Activated CD8-positive, alpha-beta memory T cell treated with anti-CD3 and anti-CD28 coated beads, Interleukin-2, amount 10 ng/mL, durations not matched to agents 7 days and 5 days (primary cell): ENCODE measurements at regions of chr15 and their contacts with region 1.

Region 1: DNA sequence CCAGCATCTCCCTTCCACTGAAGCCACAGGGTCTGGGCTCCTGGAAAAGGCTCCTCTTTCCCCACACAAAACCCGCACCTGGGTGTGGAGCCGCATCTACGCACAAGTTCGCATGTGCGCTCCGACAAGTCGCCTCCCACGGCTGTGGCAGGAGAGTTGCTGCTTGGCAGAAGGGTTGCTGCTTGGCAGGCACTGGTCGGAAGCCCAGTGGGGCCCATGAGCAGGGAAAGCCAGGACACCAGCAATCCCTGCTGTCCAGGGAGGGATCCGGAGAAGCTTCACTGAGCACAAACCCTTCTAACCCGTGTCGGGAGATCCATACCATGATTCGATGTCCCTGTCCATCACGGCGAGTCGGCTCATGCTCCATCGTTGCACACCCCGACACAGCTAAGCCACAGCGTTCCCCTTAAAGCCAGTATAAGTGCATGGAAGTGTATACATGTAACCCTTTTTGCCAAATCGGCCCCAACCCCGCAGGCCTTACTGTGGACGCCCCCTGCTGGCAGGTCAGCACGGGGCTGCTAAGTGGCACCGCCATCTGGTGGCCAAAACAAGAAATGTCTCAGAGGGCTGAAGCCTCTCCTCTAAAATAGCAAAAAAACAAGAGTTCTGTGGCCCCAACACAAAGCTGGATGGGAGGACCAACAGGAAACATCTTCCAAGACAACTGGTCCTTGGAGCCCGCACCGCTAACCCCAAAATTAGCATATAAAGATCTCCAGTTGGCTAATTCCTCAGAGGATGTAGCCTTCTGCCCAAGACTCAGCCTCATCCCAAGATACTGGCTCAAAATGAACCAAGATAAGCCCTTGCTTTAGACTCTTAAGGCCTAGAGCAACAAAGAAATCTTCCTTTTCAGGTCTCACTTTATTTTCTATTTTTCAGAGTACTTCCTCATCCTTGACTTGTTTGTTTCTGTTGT is 8.3 kb downstream of the ANKRD63 start:
- DNase-seq: peak; percentile 90
- ATAC-seq: peak; percentile 75
- H3K4me3 Mint-ChIP-seq: no peak overlapping the region
- H3K27ac Mint-ChIP-seq: no peak overlapping the region
- H3K4me1 Mint-ChIP-seq: peaks cover 8% of the 10 kb centered on the region
- H3K27me3 Mint-ChIP-seq: peaks cover 30% of the 10 kb centered on the region

Region 2: GRCh38 chr15:40028853-40029252 is 245.8 kb before region 1 on chr15:
- CTCF ChIA-PET with region 1: no interaction called
- DNase-seq: no peak
- ATAC-seq: no peak
- H3K4me3 Mint-ChIP-seq: no peak overlapping the region
- H3K27ac Mint-ChIP-seq: no peak overlapping the region
- H3K4me1 Mint-ChIP-seq: no peaks in the 10 kb centered on the region
- H3K27me3 Mint-ChIP-seq: no peaks in the 10 kb centered on the region

Region 3: GRCh38 chr15:40044717-40045571 is 229.7 kb before region 1 on chr15:
- CTCF ChIA-PET with region 1: interaction called, 107 read pairs
- DNase-seq: peak; percentile 90
- ATAC-seq: peak; percentile 92
- H3K4me3 Mint-ChIP-seq: peak overlapping the region; percentile 22
- H3K27ac Mint-ChIP-seq: peak overlapping the region; percentile 62
- H3K4me1 Mint-ChIP-seq: peaks cover 69% of the 10 kb centered on the region
- H3K27me3 Mint-ChIP-seq: no peaks in the 10 kb centered on the region

Region 4: DNA sequence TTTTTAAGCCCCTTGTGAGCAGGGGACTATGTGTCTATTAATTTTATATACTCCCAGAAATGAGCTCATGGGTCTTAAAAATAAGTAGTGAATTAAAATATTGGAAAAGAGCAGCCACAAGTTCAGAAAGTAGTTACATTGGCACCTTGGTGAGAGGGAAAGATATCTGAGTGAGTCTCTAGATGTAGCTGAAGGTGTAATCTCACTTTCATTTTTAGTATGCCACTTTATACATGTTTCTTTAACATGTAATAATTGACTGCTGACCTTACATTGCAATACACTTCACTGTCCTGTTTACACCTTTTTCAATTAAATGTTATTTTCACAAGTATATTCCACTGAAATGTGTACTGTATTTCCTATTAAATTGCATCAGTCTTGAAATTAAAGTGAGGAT is 47.9 kb before region 1 on chr15:
- CTCF ChIA-PET with region 1: interaction called, 34 read pairs
- DNase-seq: no peak
- ATAC-seq: no peak
- H3K4me3 Mint-ChIP-seq: no peak overlapping the region
- H3K27ac Mint-ChIP-seq: no peak overlapping the region
- H3K4me1 Mint-ChIP-seq: peaks cover 16% of the 10 kb centered on the region
- H3K27me3 Mint-ChIP-seq: no peaks in the 10 kb centered on the region

Region 5: DNA sequence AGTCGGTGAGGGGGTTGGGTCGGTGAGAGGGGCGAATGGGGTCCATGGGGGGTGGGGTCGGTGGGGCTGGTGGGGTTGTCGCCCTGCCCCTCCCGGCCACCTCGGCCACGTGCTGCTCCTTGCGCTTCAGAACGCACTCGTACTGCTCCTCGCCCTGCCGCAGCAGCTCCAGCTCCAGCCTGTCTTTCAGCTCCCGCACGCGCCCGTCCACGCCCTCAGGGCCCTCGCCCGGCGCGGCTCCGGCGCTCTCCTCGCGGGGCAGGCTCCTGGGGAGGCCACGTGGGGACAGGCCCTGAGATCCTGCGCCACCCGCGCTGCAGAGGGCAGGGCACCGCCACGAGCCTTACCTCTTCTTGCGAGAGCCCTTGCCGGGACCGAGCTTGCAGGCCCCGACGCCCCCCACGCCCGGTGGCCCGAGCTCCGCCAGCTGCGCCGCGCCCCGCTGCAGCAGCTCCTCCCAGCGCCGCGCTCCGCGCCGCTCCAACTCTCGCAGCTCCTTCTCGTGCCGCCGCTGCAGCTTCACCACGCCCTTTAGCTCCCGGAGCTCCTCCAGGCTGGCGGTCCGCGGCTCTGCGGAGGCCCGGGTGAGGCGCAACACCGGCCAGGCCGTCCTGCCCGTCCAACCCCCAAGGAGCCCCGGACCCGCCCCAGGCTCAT is 16.4 kb after region 1 on chr15:
- CTCF ChIA-PET with region 1: interaction called, 32 read pairs
- DNase-seq: no peak
- ATAC-seq: no peak
- H3K4me3 Mint-ChIP-seq: no peak overlapping the region
- H3K27ac Mint-ChIP-seq: no peak overlapping the region
- H3K4me1 Mint-ChIP-seq: no peaks in the 10 kb centered on the region
- H3K27me3 Mint-ChIP-seq: no peaks in the 10 kb centered on the region

Region 6: DNA sequence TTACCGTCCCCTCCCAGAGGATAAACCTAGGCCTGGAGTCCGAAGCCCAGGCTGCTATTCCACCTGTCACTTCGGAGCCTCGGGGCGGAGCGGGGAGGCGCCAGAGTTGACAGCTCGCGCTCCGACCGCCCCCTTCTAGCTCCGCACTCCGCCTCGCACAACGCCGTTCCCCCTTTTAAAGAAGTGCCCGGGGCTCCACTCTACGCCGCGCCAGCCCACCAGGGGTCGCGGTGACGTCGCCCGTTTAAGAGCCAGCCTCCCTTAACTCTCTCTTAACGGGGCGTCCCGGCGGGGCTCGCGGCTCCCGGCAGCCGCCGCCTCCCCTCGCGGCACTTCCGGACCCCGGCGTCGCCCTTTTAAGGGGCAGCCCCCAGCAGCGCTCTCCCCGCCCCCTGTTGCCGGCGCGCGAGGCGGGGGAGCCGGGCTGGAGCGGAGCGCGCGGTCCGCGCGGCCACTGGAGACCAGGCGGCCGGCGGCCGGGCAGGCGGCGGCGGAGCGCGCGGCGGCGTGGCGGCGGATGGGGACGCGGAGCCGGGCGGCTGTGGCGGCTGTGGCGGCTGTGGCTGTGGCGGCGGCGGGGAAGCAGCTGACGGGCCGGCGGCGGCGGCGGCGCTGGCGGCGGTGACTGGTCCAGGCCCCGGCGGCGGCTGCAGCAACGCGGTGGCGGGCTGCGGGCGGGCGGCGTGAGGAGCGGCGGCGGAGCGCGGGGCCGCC is 48.8 kb after region 1 on chr15 and contains the start of gene INAFM2:
- CTCF ChIA-PET with region 1: interaction called, 17 read pairs
- DNase-seq: peak; percentile 93
- ATAC-seq: peak; percentile 92
- H3K4me3 Mint-ChIP-seq: peak within 1 kb of the TSS; percentile 67
- H3K27ac Mint-ChIP-seq: peak within 1 kb of the TSS; percentile 38
- H3K4me1 Mint-ChIP-seq: peaks cover 28% of the 10 kb centered on the region
- H3K27me3 Mint-ChIP-seq: peaks cover 16% of the 10 kb centered on the region
- total RNA-seq, gene INAFM2: 4.9 to 10.2 TPM

Region 7: GRCh38 chr15:40421246-40422157 is 146.9 kb after region 1 on chr15:
- CTCF ChIA-PET with region 1: interaction called, 11 read pairs
- DNase-seq: peak; percentile 87
- ATAC-seq: peak; percentile 99
- H3K4me3 Mint-ChIP-seq: no peak overlapping the region
- H3K27ac Mint-ChIP-seq: no peak overlapping the region
- H3K4me1 Mint-ChIP-seq: peaks cover 7% of the 10 kb centered on the region
- H3K27me3 Mint-ChIP-seq: no peaks in the 10 kb centered on the region

Region 8: GRCh38 chr15:40469776-40470399 is 195.3 kb after region 1 on chr15:
- CTCF ChIA-PET with region 1: no interaction called
- DNase-seq: no peak
- ATAC-seq: no peak
- H3K4me3 Mint-ChIP-seq: peak overlapping the region; percentile 24
- H3K27ac Mint-ChIP-seq: no peak overlapping the region
- H3K4me1 Mint-ChIP-seq: peaks cover 21% of the 10 kb centered on the region
- H3K27me3 Mint-ChIP-seq: no peaks in the 10 kb centered on the region